Activated CD4-positive, alpha-beta memory T cell treated with anti-CD3 and anti-CD28 coated beads, Interleukin-2, amount 10 ng/mL, durations not matched to agents 7 days and 5 days (primary cell): ENCODE measurements at regions of chr11 and their contacts with region 1.

Region 1: GRCh38 chr11:119334174-119334930 is at the start of gene RNF26:
- DNase-seq: peak; percentile 96
- H3K4me3 Mint-ChIP-seq: peak within 1 kb of the TSS; percentile 100
- H3K27ac Mint-ChIP-seq: peak within 1 kb of the TSS; percentile 94
- H3K4me1 Mint-ChIP-seq: peaks cover 60% of the 10 kb centered on the region
- H3K27me3 Mint-ChIP-seq: peaks cover 19% of the 10 kb centered on the region
- total RNA-seq, gene RNF26: 33.5 to 35.1 TPM

Region 2: DNA sequence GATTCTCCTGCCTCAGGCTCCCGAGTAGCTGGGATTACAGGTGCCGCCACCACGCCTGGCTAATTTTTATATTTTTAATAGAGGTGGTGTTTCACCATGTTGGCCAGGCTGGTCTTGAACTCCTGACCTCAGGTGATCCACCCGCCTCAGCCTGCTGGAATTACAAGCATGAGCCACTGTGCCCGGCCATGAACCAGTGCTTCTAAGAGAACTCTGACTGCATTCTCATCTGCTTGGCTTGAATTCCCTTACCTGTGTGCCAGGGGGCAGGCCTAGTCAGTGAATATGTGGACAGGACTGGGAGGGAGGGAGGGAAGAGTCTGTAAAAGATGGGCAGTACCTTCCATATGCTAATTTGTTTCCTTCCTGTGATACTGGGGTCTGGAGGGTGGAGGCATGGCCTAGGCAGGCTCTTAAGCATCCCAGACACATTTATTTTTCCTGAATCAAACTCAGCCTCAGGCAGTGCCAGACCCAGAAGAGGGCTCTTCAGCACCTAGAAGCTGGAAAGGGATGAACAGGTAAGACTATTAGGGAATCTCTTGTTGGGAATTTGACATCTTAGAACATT is 322.8 kb before region 1 on chr11:
- CTCF ChIA-PET with region 1: no interaction called
- POLR2A ChIA-PET with region 1: no interaction called
- DNase-seq: no peak
- H3K4me3 Mint-ChIP-seq: no peak overlapping the region
- H3K27ac Mint-ChIP-seq: no peak overlapping the region
- H3K4me1 Mint-ChIP-seq: peaks cover 31% of the 10 kb centered on the region
- H3K27me3 Mint-ChIP-seq: no peaks in the 10 kb centered on the region

Region 3: DNA sequence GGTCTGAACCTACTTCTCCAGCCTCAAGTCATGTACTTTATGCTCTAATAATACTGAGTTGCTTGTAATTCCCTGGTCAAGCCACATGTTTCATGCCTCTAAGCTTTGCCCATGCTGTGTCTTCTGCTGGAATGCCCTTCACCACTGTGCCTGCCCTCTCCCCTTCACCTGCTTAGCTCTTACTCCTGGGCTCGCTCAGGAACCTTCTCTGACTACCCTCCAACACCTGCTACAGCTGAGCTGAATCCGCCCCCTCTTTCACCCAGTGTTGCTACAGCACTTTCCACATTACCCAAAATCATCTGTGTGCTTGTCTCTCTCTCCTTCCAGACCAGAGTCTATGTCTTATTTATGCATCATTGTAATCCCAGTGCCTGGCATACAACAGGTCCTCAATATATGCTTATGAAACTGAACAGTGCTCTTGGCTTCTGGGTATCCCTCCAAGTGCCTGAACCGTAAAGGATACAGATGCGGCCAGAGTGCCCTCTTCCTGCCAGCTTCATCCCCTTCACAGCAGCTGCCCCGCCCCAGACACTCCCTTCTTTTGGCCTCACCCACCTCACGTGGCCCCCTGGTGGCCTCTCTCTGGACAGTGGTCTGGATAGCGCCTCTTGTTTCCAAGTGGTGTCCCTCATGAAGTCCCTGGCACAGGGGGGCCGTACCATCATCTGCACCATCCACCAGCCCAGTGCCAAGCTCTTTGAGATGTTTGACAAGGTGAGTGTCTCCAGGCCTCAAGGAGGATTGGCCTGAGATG is 178.4 kb before region 1 on chr11:
- CTCF ChIA-PET with region 1: no interaction called
- POLR2A ChIA-PET with region 1: no interaction called
- DNase-seq: no peak
- H3K4me3 Mint-ChIP-seq: no peak overlapping the region
- H3K27ac Mint-ChIP-seq: no peak overlapping the region
- H3K4me1 Mint-ChIP-seq: no peaks in the 10 kb centered on the region
- H3K27me3 Mint-ChIP-seq: peaks cover 20% of the 10 kb centered on the region

Region 4: DNA sequence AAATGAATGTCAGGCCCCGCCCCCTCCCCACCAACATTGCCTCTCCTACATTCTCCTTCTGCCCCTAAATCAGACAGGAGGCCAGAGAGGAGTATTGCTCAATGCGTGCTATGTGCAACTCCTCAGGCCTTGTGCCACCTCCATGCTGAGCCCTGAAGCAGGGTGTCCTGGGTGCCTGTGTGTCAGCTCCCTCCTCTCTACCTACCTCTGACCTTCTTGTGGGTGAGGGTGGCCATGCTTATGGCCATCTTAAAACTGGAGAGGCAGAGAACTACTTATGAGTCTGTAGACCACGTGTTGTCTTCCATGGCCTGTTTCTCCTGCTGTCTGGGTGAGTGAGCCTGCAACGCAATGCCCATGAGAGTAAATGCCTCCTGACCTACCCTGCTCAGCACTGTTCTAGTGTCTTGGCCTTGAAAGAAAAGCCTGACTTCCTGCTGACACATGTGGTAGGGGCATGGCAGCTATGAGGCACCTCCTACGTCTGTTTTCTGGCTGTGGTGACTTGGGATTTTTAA is 27.9 kb before region 1 on chr11:
- CTCF ChIA-PET with region 1: interaction called, 15 read pairs
- POLR2A ChIA-PET with region 1: interaction called, 6 read pairs
- DNase-seq: no peak
- H3K4me3 Mint-ChIP-seq: no peak overlapping the region
- H3K27ac Mint-ChIP-seq: peak overlapping the region; percentile 67
- H3K4me1 Mint-ChIP-seq: peaks cover 20% of the 10 kb centered on the region
- H3K27me3 Mint-ChIP-seq: no peaks in the 10 kb centered on the region

Region 5: GRCh38 chr11:119347242-119347641 is 12.9 kb after region 1 on chr11:
- CTCF ChIA-PET with region 1: interaction called, 16 read pairs
- POLR2A ChIA-PET with region 1: interaction called, 3 read pairs
- DNase-seq: no peak
- H3K4me3 Mint-ChIP-seq: no peak overlapping the region
- H3K27ac Mint-ChIP-seq: no peak overlapping the region
- H3K4me1 Mint-ChIP-seq: peaks cover 6% of the 10 kb centered on the region
- H3K27me3 Mint-ChIP-seq: peaks cover 26% of the 10 kb centered on the region

Region 6: DNA sequence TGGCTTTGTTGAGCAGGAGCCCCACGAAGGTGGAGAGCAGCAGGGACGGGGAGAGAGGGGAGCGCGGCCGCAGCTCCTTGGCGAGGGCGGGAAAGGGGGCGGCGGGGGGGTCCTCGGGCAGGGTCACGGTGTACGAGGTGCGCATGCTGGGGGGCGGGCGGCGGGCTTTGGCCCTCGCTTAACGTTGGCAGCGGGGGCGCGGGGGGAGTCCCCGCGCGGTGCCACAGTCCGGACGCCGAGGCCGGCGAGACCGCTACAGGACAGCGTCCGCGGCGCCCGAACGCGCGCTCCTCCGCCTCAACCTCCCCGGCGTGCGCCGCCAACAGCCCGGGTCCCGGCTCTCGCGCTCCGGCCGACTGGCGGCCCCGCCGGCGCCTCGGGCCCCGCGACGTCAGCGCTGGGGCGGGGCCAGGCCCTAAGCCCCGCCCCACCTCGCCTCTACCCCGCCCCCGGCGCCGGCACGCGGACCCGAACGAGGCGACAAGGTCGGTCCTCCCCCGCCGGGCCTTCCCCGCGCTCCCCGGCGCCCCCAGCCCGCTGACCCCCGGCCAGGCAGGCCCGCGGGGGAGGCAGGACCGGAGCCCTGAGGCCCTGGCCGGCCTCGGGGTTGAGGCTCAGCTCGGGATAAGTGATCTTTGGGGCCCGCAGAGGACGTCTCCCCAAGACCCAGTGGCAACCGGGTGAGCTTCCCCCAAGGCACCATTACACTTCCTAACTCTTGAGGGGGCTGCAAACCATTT is 29.7 kb after region 1 on chr11:
- CTCF ChIA-PET with region 1: interaction called, 14 read pairs
- POLR2A ChIA-PET with region 1: no interaction called
- DNase-seq: peak; percentile 61
- H3K4me3 Mint-ChIP-seq: peak overlapping the region; percentile 56
- H3K27ac Mint-ChIP-seq: no peak overlapping the region
- H3K4me1 Mint-ChIP-seq: peaks cover 17% of the 10 kb centered on the region
- H3K27me3 Mint-ChIP-seq: peaks cover 42% of the 10 kb centered on the region